AG04449 (cell line): ENCODE measurements at regions of chr11 and their contacts with region 1.

Region 1: DNA sequence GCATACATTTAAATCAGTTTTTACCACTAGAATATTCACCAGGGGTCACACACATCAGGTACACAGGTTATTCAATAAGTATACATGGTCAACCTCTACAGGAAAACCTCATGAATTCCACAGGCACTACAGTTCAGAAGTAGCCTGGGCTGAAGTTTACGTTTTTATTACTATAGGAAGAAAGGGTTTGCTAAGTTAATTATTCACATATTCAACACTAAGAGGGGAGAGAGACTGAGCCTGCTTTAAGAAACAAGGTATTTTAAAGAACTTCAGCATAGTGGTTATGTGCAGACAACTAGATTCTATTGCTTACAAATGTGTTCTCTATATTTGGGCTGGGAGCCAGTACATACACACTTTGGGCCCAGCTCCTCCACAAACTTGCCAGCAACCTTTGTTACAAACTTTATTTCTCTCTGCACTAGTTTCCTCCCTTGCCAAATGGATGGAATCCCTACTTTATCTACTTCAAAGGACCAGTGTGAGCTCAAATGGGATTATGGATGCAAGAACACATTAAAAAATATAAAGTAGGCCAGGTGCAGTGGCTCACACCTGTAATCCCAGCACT is 31.9 kb downstream of the IL18BP start:
- DNase-seq: no peak
- H3K4me3 ChIP-seq: no peak overlapping the region
- CTCF ChIP-seq: no peak

Region 2: GRCh38 chr11:72015511-72016171 is 14.9 kb before region 1 on chr11:
- CTCF ChIA-PET with region 1: interaction called, 80 read pairs
- POLR2A ChIA-PET with region 1: no interaction called
- DNase-seq: no peak
- H3K4me3 ChIP-seq: no peak overlapping the region
- CTCF ChIP-seq: peak; percentile 58

Region 3: DNA sequence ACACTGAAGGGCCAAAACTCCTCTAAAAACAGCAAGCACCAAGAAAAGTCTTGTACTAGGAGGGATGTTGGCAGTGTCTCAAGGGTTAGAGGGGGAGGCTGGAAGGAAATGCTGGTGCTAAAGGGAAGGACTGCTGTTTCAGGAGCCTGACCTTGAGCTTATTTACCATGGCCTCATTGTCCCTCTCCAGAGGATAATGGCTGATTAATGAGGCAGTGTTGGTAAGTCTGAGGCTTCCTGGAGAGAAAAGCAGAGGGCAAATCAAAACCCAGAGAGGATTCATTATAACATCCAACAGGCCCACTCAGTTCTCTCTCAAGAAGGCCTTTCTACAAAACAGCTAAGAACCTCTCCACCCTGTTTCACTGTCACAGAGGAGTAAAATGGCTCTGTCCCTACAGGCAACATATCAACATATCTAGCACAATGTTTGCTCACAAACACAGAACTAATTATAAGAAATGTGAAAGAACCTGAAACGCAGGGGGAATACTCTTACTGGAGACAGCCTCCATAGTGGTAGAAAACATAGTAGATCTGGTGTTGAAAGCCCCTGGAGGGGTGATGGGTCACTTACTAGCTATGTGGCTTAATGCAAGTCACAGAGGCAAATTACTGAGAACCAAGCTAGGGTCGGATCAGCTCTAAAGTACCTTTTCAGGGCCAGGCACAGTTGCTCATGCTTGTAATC is 18.4 kb after region 1 on chr11:
- CTCF ChIA-PET with region 1: interaction called, 10 read pairs
- POLR2A ChIA-PET with region 1: no interaction called
- DNase-seq: no peak
- H3K4me3 ChIP-seq: no peak overlapping the region
- CTCF ChIP-seq: no peak

Region 4: DNA sequence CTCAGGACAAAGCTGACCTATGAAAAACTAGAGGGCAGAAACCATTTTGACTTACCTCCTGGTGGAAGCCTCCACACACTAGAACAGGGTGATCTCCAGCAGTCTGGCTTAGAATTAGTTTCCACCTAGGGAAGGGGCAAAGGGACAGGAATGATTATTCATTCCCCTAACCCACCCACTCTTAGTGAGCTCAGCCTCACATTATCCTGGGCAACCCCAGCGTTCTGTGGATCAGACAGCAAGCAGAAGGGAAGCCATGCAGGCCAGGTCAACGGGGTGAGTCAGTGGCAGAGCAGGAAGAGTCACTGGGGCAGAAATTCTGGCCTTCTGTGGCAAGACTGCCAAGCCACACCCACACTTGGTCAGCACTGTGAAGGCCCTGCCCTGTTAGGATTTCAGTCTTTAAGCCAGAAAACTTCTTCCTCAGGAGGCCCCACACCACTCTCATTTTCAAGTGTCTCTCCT is 39.3 kb after region 1 on chr11:
- CTCF ChIA-PET with region 1: interaction called, 30 read pairs
- POLR2A ChIA-PET with region 1: no interaction called
- DNase-seq: no peak
- H3K4me3 ChIP-seq: peak overlapping the region; percentile 21
- CTCF ChIP-seq: no peak

Region 5: GRCh38 chr11:72189461-72190275 is 159.1 kb after region 1 on chr11:
- CTCF ChIA-PET with region 1: interaction called, 231 read pairs
- POLR2A ChIA-PET with region 1: no interaction called
- DNase-seq: no peak
- H3K4me3 ChIP-seq: no peak overlapping the region
- CTCF ChIP-seq: no peak

Region 6: GRCh38 chr11:72238040-72238450 is 207.5 kb after region 1 on chr11:
- CTCF ChIA-PET with region 1: interaction called, 28 read pairs
- POLR2A ChIA-PET with region 1: no interaction called
- DNase-seq: no peak
- H3K4me3 ChIP-seq: no peak overlapping the region
- CTCF ChIP-seq: peak; percentile 82